HepG2 (cell line): ENCODE measurements at regions of chr6 and their contacts with region 1.

Region 1: GRCh38 chr6:147202516-147203312 is 1.5 kb upstream of the STXBP5 start:
- DNase-seq: peak; percentile 97
- ATAC-seq: peak; percentile 92
- H3K4me3 ChIP-seq: peak overlapping the region; percentile 83 to 92 (median 91)
- H3K27ac ChIP-seq: peak overlapping the region; percentile 53
- H3K4me1 ChIP-seq: peaks cover 30% of the 10 kb centered on the region
- H3K27me3 ChIP-seq: no peaks in the 10 kb centered on the region; a peak in 2 of 5 replicates
- CTCF ChIP-seq: no peak
- EP300 ChIP-seq: peak in 1 of 2 experiments; percentile 19; a peak in 1 of 4 replicates
- POLR2A ChIP-seq: peak; percentile 74 to 86
- RAD21 ChIP-seq: no peak

Region 2: DNA sequence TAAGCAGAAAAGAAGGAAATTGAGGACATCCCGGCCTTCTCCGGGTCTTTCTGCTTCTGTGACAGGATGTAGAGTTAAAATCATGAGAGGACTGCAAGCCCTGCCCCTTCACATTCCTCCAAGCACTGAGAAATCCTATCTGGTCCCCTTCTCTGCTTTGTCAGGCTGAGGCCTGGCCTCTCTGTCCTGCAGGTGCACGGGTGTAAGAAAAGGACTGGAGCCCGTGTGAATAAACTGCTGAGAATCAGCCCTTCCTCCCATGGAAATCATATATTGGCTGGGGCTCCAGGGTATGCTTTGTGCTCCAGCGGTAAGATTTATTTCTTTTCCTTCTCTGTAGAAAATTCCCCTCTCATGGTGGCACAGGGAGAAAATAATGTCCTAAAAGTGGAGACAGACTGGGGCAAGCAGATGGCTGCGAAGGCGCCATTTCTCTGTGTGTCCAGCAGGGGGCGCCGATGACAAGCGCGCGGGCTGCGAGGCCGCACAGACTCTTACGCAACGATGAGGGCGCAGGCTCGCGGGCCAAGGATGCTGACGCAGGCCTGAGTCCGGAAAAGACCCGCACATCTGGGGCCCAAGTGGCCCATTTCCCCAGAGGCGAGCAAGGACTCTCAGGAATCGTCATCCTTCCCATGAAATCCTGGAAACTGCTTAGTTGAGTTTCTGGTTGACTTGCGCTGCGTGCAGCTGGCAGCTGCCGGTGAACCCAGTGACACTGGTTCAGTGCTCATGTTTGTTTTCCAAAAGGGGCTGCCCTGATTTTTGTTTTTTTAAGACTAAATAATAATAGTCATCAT is 345.3 kb before region 1 on chr6:
- CTCF ChIA-PET with region 1: interaction called, 4 read pairs
- POLR2A ChIA-PET with region 1: no interaction called
- in situ Hi-C with region 1: no loop called
- intact Hi-C with region 1: loop called (anchors 5 kb)
- DNase-seq: peak; percentile 63
- ATAC-seq: peak; percentile 99
- H3K4me3 ChIP-seq: peak overlapping the region in 1 of 3 experiments; percentile 42; a peak in 1 of 6 replicates
- H3K27ac ChIP-seq: no peak overlapping the region
- H3K4me1 ChIP-seq: 0 out of 2 replicates have a peak, but pooled peaks cover 4% of the 10 kb centered on the region
- H3K27me3 ChIP-seq: no peaks in the 10 kb centered on the region; a peak in 2 of 5 replicates
- CTCF ChIP-seq: peak; percentile 99
- EP300 ChIP-seq: peak in 1 of 2 experiments; percentile 39; a peak in 1 of 4 replicates
- POLR2A ChIP-seq: no peak
- RAD21 ChIP-seq: peak; percentile 98

Region 3: GRCh38 chr6:146905181-146905704 is 297.5 kb before region 1 on chr6:
- CTCF ChIA-PET with region 1: no interaction called
- POLR2A ChIA-PET with region 1: no interaction called
- in situ Hi-C with region 1: loop called (anchors 10 kb)
- intact Hi-C with region 1: no loop called
- DNase-seq: peak; percentile 15
- ATAC-seq: no peak
- H3K4me3 ChIP-seq: no peak overlapping the region
- H3K27ac ChIP-seq: no peak overlapping the region
- H3K4me1 ChIP-seq: peaks cover 9% of the 10 kb centered on the region; the same call in 1 of the 2 replicates
- H3K27me3 ChIP-seq: no peaks in the 10 kb centered on the region
- CTCF ChIP-seq: no peak
- EP300 ChIP-seq: no peak
- POLR2A ChIP-seq: no peak
- RAD21 ChIP-seq: no peak

Region 4: DNA sequence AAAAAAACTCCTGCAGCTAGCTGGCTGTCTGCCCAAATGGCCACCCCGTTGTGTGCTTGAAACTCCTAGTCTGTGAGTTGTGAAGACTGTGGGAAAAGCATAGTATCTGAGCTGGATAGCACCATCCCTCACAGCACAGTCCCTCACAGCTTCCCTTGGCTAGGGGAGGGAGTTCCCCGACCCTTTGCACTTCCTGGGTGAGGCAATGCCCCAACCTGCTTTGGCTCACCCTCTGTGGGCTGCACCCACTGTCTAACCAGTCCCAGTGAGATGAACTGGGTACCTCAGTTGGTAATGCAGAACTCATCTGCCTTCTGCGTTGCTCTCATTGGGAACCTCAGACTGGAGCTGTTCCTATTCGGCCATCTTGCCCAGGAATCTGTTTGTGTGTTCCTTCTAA is 259.1 kb before region 1 on chr6:
- CTCF ChIA-PET with region 1: no interaction called
- POLR2A ChIA-PET with region 1: no interaction called
- in situ Hi-C with region 1: no loop called
- intact Hi-C with region 1: loop called (anchors 1 kb)
- DNase-seq: no peak
- ATAC-seq: peak; percentile 41; the same call in 2 of the 3 replicates
- H3K4me3 ChIP-seq: no peak overlapping the region
- H3K27ac ChIP-seq: no peak overlapping the region
- H3K4me1 ChIP-seq: peaks cover 31% of the 10 kb centered on the region
- H3K27me3 ChIP-seq: no peaks in the 10 kb centered on the region
- CTCF ChIP-seq: no peak
- EP300 ChIP-seq: no peak
- POLR2A ChIP-seq: no peak
- RAD21 ChIP-seq: no peak

Region 5: DNA sequence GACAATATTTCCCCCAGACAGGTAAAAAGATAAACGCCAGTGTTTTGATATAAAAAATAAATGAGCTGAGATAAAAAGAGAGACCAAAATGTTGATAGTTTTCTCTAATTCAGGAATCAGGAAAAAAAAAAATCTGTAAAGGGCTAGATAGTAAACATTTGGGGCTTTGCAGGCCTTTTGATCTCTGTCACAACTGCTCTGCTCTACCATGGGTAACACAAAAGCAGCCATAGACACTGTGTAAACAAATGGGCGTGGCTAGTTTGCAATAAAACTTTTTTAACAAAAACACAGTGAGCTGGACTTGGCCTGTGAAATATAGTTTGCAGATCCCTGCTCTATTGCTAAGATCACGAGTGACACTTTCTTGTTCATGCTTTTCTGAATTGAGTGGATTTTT is 217.6 kb before region 1 on chr6:
- CTCF ChIA-PET with region 1: no interaction called
- POLR2A ChIA-PET with region 1: interaction called, 7 read pairs
- in situ Hi-C with region 1: loop called (anchors 10 kb)
- intact Hi-C with region 1: loop called (anchors 2 kb)
- DNase-seq: peak; percentile 97
- ATAC-seq: peak; percentile 82
- H3K4me3 ChIP-seq: peak overlapping the region; percentile 25 to 66 (median 49); a peak in 4 of 6 replicates
- H3K27ac ChIP-seq: peak overlapping the region; percentile 73
- H3K4me1 ChIP-seq: peaks cover 74% of the 10 kb centered on the region
- H3K27me3 ChIP-seq: no peaks in the 10 kb centered on the region
- CTCF ChIP-seq: no peak
- EP300 ChIP-seq: peak; percentile 76 to 93; a peak in 3 of 4 replicates
- POLR2A ChIP-seq: no peak
- RAD21 ChIP-seq: no peak

Region 6: DNA sequence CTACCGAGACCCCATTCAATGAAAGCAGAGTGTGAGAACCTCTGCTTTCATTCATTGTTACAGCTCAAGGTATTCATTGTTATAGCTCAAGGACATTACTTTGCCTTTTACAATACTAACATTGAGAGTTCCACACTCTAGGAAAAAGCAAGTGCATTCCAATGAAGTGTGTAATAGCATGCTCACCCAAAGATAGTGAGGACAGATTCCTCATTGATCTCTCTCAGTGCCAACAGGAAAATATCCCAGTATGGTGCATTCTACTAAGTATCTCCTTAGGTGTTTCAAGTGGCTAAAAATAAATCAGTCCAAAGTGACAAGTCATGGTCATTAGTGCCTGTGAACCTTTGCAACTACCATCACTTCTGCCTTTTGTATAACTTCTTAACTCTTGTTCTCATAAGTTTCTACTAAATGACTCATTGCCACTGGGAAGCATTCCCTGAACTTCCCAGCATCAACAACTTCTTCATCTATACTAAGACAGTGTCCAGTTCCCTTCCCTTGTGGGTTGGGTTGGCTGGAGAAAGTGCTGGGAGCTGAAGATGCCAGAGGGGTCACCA is 139.2 kb before region 1 on chr6:
- CTCF ChIA-PET with region 1: no interaction called
- POLR2A ChIA-PET with region 1: no interaction called
- in situ Hi-C with region 1: no loop called
- intact Hi-C with region 1: loop called (anchors 5 kb)
- DNase-seq: peak; percentile 70
- ATAC-seq: peak; percentile 62
- H3K4me3 ChIP-seq: no peak overlapping the region
- H3K27ac ChIP-seq: no peak overlapping the region
- H3K4me1 ChIP-seq: peaks cover 40% of the 10 kb centered on the region
- H3K27me3 ChIP-seq: no peaks in the 10 kb centered on the region
- CTCF ChIP-seq: no peak
- EP300 ChIP-seq: no peak
- POLR2A ChIP-seq: no peak
- RAD21 ChIP-seq: no peak

Region 7: DNA sequence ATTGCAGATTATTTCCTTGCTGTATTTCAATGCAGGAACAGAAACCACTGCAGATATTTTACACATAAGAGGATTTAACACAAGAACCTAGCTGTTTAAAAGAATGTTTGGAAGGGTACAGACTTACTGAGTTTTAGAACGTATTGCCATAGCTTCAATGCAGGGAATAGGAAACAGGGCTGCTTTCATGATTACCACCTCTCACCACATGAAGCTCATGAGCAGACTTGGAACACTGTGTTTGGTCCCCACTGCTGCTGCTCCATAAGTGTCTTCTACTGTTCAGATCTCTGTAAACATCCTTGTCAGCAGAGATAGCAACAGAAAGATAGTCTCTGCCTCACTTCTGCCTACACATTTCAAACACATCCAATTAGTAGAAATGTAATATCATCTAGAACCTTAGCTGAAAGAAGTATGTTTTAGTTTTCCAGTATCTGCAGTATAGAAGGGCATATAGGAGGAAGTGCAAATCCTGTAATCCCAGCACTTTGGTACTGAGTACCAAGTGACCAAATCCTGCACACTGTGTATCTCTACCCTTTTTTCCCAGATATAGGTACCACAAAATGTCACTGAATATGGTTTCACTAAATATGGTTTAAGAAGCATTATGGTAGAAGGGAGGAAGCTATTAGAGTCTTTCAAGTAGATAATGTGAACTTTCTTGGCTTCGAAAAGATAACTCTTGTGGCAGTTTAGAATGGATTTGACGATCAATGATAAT is 53.4 kb after region 1 on chr6:
- CTCF ChIA-PET with region 1: no interaction called
- POLR2A ChIA-PET with region 1: no interaction called
- in situ Hi-C with region 1: no loop called
- intact Hi-C with region 1: no loop called
- DNase-seq: no peak
- ATAC-seq: peak; percentile 56
- H3K4me3 ChIP-seq: no peak overlapping the region
- H3K27ac ChIP-seq: no peak overlapping the region
- H3K4me1 ChIP-seq: no peaks in the 10 kb centered on the region
- H3K27me3 ChIP-seq: no peaks in the 10 kb centered on the region
- CTCF ChIP-seq: no peak
- EP300 ChIP-seq: no peak
- POLR2A ChIP-seq: no peak
- RAD21 ChIP-seq: no peak